ENCODE measurements at regions of chr19 and their contacts with region 1.

Region 1: DNA sequence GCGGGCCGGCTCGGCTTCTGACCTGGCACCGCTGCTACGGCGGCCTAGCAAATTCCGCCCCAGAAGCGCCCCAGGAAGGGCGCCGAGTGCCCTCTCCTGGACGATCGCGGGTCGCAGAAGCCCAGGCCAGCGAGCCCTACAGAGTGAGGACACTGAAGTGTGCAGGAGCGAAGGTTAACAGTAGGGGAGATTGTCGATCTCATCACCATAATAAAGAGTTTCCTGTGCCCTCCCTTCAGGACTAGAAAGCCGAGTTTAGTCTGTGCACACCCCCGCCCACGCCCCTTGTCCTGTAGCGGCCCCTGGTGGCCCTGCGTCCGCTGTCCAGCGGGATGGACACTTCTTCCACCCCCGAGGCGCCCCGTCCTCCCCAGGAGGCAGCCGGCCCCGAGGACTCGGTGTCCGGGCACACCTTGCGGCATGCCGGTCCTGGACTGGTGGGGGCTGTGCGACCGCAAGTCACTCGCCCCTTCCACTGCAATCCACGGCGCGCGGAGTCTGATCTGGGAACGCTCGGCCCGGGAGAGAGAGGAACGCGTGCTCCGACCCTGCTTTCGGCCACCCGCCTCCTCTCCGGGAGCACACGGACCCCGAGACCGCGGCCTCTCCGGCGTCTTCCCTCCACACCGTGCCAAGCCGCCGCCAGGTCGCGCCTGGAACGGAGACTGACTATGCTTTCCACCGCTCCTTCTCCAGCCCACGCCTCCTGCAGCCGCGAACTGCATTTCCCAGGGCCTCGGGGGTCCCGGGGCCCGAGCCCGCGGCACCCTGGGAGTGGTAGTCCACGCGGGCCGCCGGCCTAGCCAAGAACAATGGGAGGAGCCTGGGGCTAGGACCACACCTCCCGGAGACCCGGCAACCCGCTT is 769 bp upstream of the KMT2B start:
- DNase-seq: peak; percentile 95
- H3K4me3 ChIP-seq: peak overlapping the region; percentile 30 to 57 (median 46)
- H3K27ac ChIP-seq: peak overlapping the region; percentile 36
- H3K4me1 ChIP-seq: peaks cover 17% of the 10 kb centered on the region
- H3K27me3 ChIP-seq: no peaks in the 10 kb centered on the region
- CTCF ChIP-seq: peak; percentile 87 to 91
- POLR2A ChIP-seq: no peak

Region 2: DNA sequence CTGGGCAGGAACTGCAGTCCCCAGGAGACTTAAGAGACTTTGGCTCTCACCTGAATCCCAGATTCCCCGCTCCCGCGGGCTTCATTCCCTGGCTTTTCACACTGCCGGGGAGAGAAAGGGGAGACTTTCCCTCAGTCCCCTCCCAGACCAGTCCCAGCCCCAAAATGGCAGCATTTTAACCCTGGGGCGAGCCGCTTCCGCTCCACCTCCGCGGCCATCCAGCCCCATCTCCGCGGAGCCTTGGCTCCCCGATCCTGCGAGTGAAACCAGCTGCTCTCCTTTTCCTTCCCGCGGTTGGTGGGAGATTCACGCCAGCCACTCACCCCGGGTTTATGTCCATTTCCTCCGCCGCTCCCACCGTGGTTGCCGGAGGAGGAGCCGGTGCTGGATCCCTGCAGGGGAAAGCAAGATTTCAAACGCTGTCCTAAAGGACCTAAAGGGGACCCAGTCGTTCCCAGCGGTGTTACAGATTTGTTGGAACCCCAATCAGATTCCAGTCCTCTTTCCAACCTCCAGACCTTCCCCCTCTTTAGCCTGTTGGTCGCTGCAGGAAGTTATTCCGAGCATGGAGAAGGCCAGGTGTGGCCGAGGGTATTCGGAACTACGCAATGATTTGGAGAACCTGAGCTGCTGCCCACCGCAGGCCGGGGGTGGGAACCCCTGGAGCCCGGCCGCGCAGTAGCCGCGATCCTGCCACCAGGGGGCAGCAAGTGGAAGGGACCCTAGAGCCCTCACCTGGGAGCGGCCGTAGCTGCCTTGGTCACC is 207.0 kb before region 1 on chr19:
- CTCF ChIA-PET with region 1: no interaction called
- POLR2A ChIA-PET with region 1: no interaction called
- dilution Hi-C with region 1: no loop called
- intact Hi-C with region 1: loop called (anchors 1 kb)
- DNase-seq: peak; percentile 30
- H3K4me3 ChIP-seq: no peak overlapping the region
- H3K27ac ChIP-seq: no peak overlapping the region
- H3K4me1 ChIP-seq: no peaks in the 10 kb centered on the region
- H3K27me3 ChIP-seq: peaks cover 33 to 40% of the 10 kb centered on the region in 2 experiments
- CTCF ChIP-seq: peak; percentile 88 to 94
- POLR2A ChIP-seq: no peak

Region 3: DNA sequence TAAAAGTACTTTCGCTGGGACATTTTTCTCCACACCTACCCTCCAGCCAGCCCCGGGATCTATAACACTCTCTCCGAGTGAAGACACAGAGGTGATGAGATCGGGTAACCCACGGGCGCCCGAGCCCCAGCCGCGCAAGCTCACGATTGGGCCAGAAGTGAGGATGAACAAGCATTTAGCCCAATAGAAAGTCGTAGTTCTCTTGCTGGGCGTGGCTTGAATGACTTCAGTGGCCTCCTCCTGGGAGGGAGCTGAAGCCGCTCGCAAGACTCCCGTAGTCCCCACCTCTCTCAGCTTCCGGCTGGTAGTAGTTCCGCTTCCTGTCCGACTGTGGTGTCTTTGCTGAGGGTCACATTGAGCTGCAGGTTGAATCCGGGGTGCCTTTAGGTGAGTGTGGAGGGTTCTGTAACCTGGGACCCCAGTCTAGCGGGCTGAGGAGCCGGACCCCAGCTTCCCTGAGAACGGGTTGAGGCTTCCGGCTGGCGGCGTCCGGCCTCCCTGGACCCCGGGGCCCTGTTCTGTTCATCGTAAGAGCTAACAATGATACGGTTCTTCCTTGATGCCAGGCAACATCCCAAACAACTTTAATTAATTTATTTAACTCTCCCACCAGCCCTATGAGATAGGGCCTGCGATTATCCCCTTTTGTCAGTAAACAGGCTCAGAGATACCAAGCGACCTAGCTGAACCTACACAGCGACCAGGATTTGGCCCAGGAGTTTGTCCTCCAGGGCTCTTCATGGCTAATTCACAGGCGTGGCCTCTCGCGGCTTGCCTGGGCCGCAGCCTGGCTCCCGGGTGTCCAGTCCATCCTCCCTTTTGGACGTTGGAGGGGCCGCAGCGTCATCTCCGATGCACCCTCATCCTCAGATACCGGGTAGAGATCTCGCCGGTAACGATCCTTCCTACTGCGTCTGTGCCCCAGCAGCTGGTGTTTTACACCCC is 68.7 kb before region 1 on chr19 and contains the start of gene COX6B1:
- CTCF ChIA-PET with region 1: no interaction called
- POLR2A ChIA-PET with region 1: no interaction called
- dilution Hi-C with region 1: no loop called
- intact Hi-C with region 1: loop called (anchors 1 kb)
- DNase-seq: peak; percentile 96
- H3K4me3 ChIP-seq: peak within 1 kb of the TSS; percentile 81 to 97 (median 89)
- H3K27ac ChIP-seq: peak within 1 kb of the TSS; percentile 65
- H3K4me1 ChIP-seq: peaks cover 12% of the 10 kb centered on the region
- H3K27me3 ChIP-seq: no peaks in the 10 kb centered on the region
- CTCF ChIP-seq: no peak
- POLR2A ChIP-seq: peak; percentile 88
- total RNA-seq, gene COX6B1: 300 and 327 TPM in 2 replicates

Region 4: DNA sequence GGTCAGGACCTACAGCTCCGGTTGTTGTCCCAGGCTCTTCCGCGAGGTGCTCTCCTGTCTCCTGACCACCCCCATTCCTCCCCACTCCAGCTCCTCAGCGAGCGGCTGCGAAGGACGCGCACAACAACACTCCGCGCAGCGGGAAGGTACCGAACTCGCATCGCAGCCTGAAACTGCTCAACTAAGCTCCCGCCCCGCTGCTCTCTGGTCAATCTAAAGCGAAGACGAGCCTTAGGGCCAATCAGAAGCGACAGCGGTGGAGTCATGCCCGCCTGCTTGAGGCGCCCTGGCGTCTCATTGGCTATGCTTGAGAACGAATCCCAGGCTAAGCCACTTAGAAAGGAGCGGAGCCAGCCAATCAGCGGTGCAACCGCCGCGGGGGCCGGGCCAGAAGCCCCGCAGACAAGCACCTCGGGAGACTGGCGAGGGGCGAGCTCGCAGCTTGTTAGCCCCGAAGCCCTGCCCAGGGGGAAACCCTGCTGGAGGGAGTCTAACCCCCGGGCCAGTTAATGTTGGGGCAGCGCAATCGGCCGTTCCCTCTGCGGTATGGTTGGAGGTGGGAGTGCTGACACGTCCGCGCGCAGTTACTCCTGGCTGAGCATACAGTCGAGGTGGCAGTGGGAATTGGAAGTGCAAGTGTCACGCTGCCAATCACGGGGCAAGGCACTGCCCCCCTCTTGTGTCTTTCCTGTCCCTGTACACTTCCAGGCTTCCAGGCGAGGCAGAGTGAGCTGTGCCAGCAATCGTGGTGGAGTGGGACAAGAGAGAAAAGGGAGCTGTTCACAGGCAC is 14.6 kb before region 1 on chr19:
- CTCF ChIA-PET with region 1: interaction called, 5 read pairs
- POLR2A ChIA-PET with region 1: no interaction called
- dilution Hi-C with region 1: no loop called
- intact Hi-C with region 1: loop called (anchors 1 kb)
- DNase-seq: peak; percentile 97
- H3K4me3 ChIP-seq: peak overlapping the region; percentile 11 to 45 (median 25)
- H3K27ac ChIP-seq: no peak overlapping the region
- H3K4me1 ChIP-seq: no peaks in the 10 kb centered on the region
- H3K27me3 ChIP-seq: no peaks in the 10 kb centered on the region
- CTCF ChIP-seq: no peak
- POLR2A ChIP-seq: no peak

Region 5: DNA sequence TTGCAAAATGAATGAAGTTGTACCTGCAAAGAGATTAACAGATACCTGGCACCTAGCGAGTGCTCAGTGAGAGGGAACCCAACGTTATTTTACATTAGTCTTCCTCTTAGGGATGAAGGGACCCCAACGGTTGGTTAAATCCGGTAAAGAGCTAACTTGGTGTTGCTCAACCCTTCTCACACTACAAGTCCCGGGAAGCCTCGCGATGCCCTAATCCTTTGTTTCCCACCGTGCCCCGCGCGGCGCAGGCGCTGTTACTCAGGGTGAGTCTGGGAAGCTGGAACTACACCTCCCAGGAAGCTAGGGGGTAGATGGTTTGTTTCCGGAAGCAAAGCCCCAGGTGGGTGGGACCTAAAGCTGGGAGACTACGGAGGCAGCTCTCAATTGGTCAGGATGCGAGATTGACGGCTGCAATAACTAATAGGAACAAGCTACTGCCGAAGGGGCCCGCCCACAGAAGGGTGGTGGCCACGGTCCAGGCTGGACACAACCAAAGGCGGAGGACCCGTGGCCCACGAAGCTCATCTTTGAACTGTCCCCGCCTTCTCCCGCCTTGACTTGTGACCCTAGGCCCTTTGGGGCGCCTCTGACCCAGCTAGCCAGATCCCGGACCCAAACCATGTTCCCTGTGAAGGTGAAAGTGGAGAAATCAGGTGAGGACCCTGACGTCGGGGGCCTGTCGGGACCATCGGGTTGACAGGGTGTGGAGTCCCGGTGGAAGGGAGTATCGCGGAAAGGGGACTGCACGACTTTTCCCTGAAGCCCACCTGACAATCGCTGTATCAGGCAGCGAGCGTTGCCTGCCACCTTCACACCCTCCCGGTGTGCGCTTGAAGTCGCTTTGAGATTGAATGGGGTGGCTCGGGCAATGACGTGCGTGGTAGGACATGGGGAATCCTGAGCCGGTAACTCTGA is 31.3 kb after region 1 on chr19 and contains the start of gene LIN37:
- CTCF ChIA-PET with region 1: interaction called, 7 read pairs
- POLR2A ChIA-PET with region 1: no interaction called
- dilution Hi-C with region 1: no loop called
- intact Hi-C with region 1: loop called (anchors 1 kb)
- DNase-seq: peak; percentile 100
- H3K4me3 ChIP-seq: peak within 1 kb of the TSS; percentile 78 to 90 (median 81)
- H3K27ac ChIP-seq: peak within 1 kb of the TSS; percentile 58
- H3K4me1 ChIP-seq: peaks cover 19% of the 10 kb centered on the region
- H3K27me3 ChIP-seq: no peaks in the 10 kb centered on the region
- CTCF ChIP-seq: no peak
- POLR2A ChIP-seq: peak; percentile 94
- total RNA-seq, gene LIN37: 11.3 and 15.5 TPM in 2 replicates

Region 6: GRCh38 chr19:35899547-35900214 is 182.6 kb after region 1 on chr19:
- CTCF ChIA-PET with region 1: no interaction called
- POLR2A ChIA-PET with region 1: no interaction called
- dilution Hi-C with region 1: no loop called
- intact Hi-C with region 1: loop called (anchors 1 kb)
- DNase-seq: peak; percentile 70
- H3K4me3 ChIP-seq: peak overlapping the region; percentile 65 to 96 (median 85)
- H3K27ac ChIP-seq: peak overlapping the region; percentile 65
- H3K4me1 ChIP-seq: peaks cover 16% of the 10 kb centered on the region
- H3K27me3 ChIP-seq: peaks cover 0 to 6% of the 10 kb centered on the region in 2 experiments
- CTCF ChIP-seq: no peak
- POLR2A ChIP-seq: no peak

Measured in endothelial cell of umbilical vein (primary cell).